GM12878 (cell line): ENCODE measurements at regions of chr10 and their contacts with region 1.

Region 1: GRCh38 chr10:116521404-116522290 is 24.1 kb upstream of the PNLIP start:
- DNase-seq: no peak
- ATAC-seq: peak; percentile 50; the same call in 1 of the 3 replicates
- H3K4me3 ChIP-seq: no peak overlapping the region
- H3K27ac ChIP-seq: no peak overlapping the region
- H3K4me1 ChIP-seq: no peaks in the 10 kb centered on the region
- H3K27me3 ChIP-seq: no peaks in the 10 kb centered on the region
- CTCF ChIP-seq: peak; percentile 56 to 73 (median 71)
- EP300 ChIP-seq: no peak
- POLR2A ChIP-seq: no peak
- RAD21 ChIP-seq: 0 out of 2 replicates have a peak, but pooled peaks have one; percentile 23

Region 2: DNA sequence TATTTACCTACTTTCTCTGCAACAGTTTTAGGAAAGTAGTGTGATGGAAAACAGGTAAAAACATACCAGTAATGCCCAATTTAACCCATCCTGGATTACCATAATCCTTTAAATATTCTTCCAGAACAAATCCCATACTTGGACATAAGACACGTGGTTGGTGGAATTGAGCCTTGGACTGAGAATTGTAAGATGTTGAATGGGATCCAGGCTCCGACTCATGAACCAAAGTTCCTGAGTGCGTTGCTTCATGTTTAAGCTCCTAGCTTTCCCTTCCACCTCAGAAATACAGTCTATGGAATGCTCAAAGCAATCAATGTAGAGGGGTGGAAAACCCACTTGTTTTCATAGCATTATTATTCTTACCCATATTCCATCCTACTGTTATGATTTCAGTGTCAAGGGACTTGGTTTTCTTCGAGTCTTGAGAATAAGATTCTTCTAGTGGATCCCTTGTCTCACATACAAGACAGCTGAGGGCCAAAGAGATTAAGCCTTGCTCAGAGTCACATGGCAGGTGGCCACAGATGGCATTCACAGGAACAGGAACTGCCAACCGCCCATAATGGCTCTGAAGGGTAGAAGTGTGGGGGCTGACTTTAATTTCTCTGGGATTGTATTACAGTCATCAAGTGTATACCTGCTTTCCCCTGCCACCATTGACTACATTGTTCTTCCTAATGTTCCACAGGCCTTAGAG is 419.9 kb before region 1 on chr10:
- CTCF ChIA-PET with region 1: no interaction called
- POLR2A ChIA-PET with region 1: no interaction called
- RAD21 ChIA-PET with region 1: no interaction called
- SMC1A ChIA-PET with region 1: no interaction called
- in situ Hi-C with region 1: no loop called
- intact Hi-C with region 1: no loop called
- DNase-seq: no peak
- ATAC-seq: no peak
- H3K4me3 ChIP-seq: no peak overlapping the region
- H3K27ac ChIP-seq: no peak overlapping the region
- H3K4me1 ChIP-seq: no peaks in the 10 kb centered on the region
- H3K27me3 ChIP-seq: no peaks in the 10 kb centered on the region; a peak in 1 of 4 replicates
- CTCF ChIP-seq: no peak
- EP300 ChIP-seq: no peak
- POLR2A ChIP-seq: no peak
- RAD21 ChIP-seq: no peak

Region 3: GRCh38 chr10:116444527-116445142 is 77.0 kb before region 1 on chr10:
- CTCF ChIA-PET with region 1: no interaction called
- POLR2A ChIA-PET with region 1: no interaction called
- RAD21 ChIA-PET with region 1: no interaction called
- SMC1A ChIA-PET with region 1: no interaction called
- in situ Hi-C with region 1: no loop called
- intact Hi-C with region 1: loop called (anchors 5 kb)
- DNase-seq: peak; percentile 3
- ATAC-seq: peak; percentile 81
- H3K4me3 ChIP-seq: no peak overlapping the region
- H3K27ac ChIP-seq: no peak overlapping the region
- H3K4me1 ChIP-seq: no peaks in the 10 kb centered on the region
- H3K27me3 ChIP-seq: no peaks in the 10 kb centered on the region
- CTCF ChIP-seq: peak; percentile 69 to 73 (median 72); a peak in 5 of 6 replicates
- EP300 ChIP-seq: no peak
- POLR2A ChIP-seq: no peak
- RAD21 ChIP-seq: peak; percentile 48